ENCODE measurements at regions of chr1 and their contacts with region 1.

Region 1: GRCh38 chr1:111507411-111508201 is 4.2 kb upstream of the ADORA3 start:
- DNase-seq: peak; percentile 32
- H3K4me3 ChIP-seq: peak overlapping the region; percentile 41
- H3K27ac ChIP-seq: peak overlapping the region; percentile 91
- H3K27me3 ChIP-seq: peaks cover 4% of the 10 kb centered on the region
- CTCF ChIP-seq: peak; percentile 28; the same call in 1 of the 2 replicates

Region 2: GRCh38 chr1:111354584-111354983 is 153.0 kb before region 1 on chr1:
- CTCF ChIA-PET with region 1: no interaction called
- POLR2A ChIA-PET with region 1: no interaction called
- DNase-seq: no peak
- H3K4me3 ChIP-seq: no peak overlapping the region
- H3K27ac ChIP-seq: no peak overlapping the region
- H3K27me3 ChIP-seq: no peaks in the 10 kb centered on the region
- CTCF ChIP-seq: no peak

Region 3: GRCh38 chr1:111463029-111463683 is 44.5 kb before region 1 on chr1:
- CTCF ChIA-PET with region 1: interaction called, 12 read pairs
- POLR2A ChIA-PET with region 1: no interaction called
- DNase-seq: peak; percentile 81
- H3K4me3 ChIP-seq: no peak overlapping the region
- H3K27ac ChIP-seq: peak overlapping the region; percentile 68
- H3K27me3 ChIP-seq: no peaks in the 10 kb centered on the region
- CTCF ChIP-seq: no peak

Region 4: GRCh38 chr1:111535256-111536191 is 27.9 kb after region 1 on chr1:
- CTCF ChIA-PET with region 1: interaction called, 20 read pairs
- POLR2A ChIA-PET with region 1: interaction called, 4 read pairs
- DNase-seq: no peak
- H3K4me3 ChIP-seq: no peak overlapping the region
- H3K27ac ChIP-seq: no peak overlapping the region
- H3K27me3 ChIP-seq: no peaks in the 10 kb centered on the region
- CTCF ChIP-seq: no peak

Region 5: GRCh38 chr1:111592389-111593361 is 85.1 kb after region 1 on chr1:
- CTCF ChIA-PET with region 1: interaction called, 11 read pairs
- POLR2A ChIA-PET with region 1: interaction called, 3 read pairs
- DNase-seq: peak; percentile 55
- H3K4me3 ChIP-seq: peak overlapping the region; percentile 34
- H3K27ac ChIP-seq: peak overlapping the region; percentile 71
- H3K27me3 ChIP-seq: no peaks in the 10 kb centered on the region
- CTCF ChIP-seq: no peak

Region 6: DNA sequence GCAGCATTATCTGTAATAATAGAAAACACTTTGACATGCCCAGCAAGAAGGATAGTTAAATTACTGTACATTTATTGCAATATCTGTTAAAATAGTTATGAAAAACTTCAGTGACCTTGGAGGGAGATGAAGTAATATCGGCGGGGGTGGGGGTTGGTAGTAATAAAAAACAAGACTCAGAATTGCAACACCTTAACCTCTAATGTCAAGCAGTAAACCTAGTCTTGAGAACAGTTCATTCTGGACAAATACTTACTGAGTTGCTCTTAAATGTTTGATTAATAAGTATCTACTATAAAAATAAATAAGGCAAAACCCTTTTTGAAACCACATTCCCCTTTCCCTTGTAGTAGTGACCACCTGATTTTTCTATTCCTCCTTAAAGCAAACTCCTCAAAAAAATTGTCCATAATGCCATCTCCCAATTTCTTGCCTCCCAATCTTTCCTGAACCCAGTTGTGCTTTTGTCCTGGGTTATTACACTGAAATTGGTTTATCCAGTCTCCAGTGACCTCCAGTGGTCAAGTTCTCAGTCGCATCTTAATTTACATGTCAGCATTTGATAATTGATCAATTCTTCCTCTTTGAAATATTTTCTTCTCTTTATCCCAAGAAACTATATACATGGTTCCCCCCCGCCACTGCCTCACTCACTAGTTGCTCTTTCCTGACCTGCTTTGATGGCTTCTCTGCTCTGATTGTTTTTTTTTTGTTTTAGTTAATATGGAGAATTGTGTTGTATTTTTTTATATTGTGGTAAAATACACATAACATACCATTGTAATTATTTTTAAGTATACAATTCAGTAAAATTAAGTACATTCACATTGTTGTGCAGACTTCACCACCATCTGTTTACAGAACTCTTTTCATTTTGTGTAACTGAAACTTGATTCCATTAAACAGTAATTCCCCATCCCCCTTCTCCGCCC is 148.7 kb after region 1 on chr1:
- CTCF ChIA-PET with region 1: interaction called, 35 read pairs
- POLR2A ChIA-PET with region 1: interaction called, 3 read pairs
- DNase-seq: peak; percentile 15
- H3K4me3 ChIP-seq: no peak overlapping the region
- H3K27ac ChIP-seq: no peak overlapping the region
- H3K27me3 ChIP-seq: no peaks in the 10 kb centered on the region
- CTCF ChIP-seq: peak; percentile 64

Region 7: DNA sequence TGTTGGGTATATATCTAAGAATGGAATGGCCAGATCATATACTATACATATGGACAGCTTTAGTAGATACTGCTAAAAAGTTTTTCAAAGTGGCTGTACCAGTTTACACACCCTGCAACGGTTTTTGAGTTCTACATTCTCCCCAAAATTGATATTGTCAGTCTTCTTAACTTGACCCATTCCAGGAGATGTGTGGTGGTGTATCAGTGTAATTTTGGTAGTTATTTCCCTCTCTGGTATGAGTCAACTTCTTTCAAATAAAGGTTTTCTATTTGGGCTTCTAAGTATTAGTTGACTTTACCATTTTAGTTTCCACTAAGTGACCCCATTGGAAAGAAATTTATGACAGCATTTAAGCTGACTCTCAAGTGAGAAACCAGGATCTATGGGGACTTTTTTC is 202.4 kb after region 1 on chr1:
- CTCF ChIA-PET with region 1: interaction called, 73 read pairs
- POLR2A ChIA-PET with region 1: interaction called, 4 read pairs
- DNase-seq: no peak
- H3K4me3 ChIP-seq: no peak overlapping the region
- H3K27ac ChIP-seq: no peak overlapping the region
- H3K27me3 ChIP-seq: no peaks in the 10 kb centered on the region
- CTCF ChIP-seq: no peak

Region 8: GRCh38 chr1:111755331-111756123 is 247.9 kb after region 1 on chr1 and contains the start of gene DDX20:
- CTCF ChIA-PET with region 1: interaction called, 33 read pairs
- POLR2A ChIA-PET with region 1: no interaction called
- DNase-seq: peak; percentile 95
- H3K4me3 ChIP-seq: peak within 1 kb of the TSS; percentile 92
- H3K27ac ChIP-seq: peak within 1 kb of the TSS; percentile 96
- H3K27me3 ChIP-seq: no peaks in the 10 kb centered on the region
- CTCF ChIP-seq: peak; percentile 84
- polyA plus RNA-seq, gene DDX20: 8.2 and 12.3 TPM in 2 replicates